HCT116 (cell line): ENCODE measurements at regions of chr18 and their contacts with region 1.

Region 1: GRCh38 chr18:58768293-58768974 is 96.2 kb upstream of the ZNF532 start:
- DNase-seq: peak; percentile 23
- ATAC-seq: peak; percentile 91
- H3K4me3 ChIP-seq: no peak overlapping the region
- H3K27ac ChIP-seq: no peak overlapping the region
- H3K4me1 ChIP-seq: peaks cover 2 to 3% of the 10 kb centered on the region in 2 experiments; a peak in 1 of 4 replicates
- H3K27me3 ChIP-seq: no peaks in the 10 kb centered on the region
- CTCF ChIP-seq: peak; percentile 53 to 75 (median 67); a peak in 5 of 6 replicates
- POLR2A ChIP-seq: no peak
- RAD21 ChIP-seq: peak; percentile 81

Region 2: DNA sequence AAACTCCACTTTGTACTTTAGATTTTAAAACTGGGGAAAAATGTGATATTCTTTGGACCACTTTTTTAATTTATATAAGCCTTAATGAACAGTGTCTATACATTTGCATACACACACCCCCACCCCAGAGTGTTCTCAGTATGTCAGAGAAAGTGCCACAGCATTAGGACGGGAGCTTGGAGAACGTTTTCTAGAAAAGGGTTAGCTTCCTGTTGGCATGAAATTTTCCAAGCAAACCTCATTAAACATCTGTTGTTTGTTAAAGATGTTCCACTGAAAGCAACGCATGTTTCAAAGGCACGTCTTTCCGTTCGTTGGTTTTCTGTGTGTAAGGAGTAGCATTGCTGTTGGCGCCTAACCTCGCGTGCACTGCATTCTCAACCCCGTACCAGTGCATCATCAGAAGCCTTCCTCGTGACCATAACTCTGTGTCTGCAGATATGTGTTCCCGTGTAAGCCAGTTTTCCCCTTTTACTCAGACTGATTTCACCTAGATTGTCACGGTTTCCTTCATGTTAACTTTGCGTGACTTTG is 368.0 kb before region 1 on chr18:
- CTCF ChIA-PET with region 1: interaction called, 4 read pairs
- POLR2A ChIA-PET with region 1: no interaction called
- RAD21 ChIA-PET with region 1: no interaction called
- intact Hi-C with region 1: loop called (anchors 1 kb)
- DNase-seq: no peak
- ATAC-seq: no peak
- H3K4me3 ChIP-seq: no peak overlapping the region
- H3K27ac ChIP-seq: no peak overlapping the region
- H3K4me1 ChIP-seq: no peaks in the 10 kb centered on the region
- H3K27me3 ChIP-seq: no peaks in the 10 kb centered on the region
- CTCF ChIP-seq: 0 out of 6 replicates have a peak, but pooled peaks of 1 of the 3 experiments have one; percentile 0
- POLR2A ChIP-seq: no peak
- RAD21 ChIP-seq: no peak

Region 3: DNA sequence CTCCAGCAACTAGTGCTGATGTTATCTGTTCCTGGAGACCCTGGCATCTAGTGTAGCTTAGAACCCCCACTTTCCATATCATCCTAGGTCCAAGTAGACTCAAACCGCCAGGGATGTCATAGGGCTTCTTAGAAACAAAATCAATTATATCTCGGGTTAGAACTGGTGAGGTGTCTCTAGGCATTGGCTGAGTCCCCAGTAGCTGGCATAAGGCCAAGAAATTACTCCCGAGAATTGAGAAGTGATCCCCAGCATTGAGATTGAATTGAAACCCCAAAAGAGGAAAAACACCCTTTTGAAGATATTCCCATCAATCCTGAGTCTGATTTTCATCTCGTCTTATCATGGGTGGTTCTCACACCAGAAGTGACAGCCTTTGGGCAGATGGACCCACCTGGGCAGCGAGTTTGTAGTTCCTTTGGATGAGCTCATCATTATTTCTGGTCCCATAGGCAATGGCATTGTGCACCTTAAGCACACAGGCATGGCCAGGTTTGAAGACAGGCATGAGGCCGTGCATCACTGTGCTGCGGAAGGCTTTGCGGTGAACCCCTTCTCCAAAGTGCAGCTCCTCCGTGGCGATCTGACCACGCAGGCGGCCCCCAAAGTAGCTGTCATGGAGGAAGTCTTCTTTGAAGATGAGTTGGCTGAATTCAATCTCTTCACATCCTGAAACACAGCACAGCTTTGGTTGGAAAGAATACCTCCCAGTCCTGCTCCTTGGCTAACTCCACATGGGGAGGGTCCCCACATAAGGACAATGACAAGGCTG is 251.7 kb before region 1 on chr18:
- CTCF ChIA-PET with region 1: interaction called, 12 read pairs
- POLR2A ChIA-PET with region 1: no interaction called
- RAD21 ChIA-PET with region 1: interaction called in 1 of 2 experiments, 5 read pairs
- intact Hi-C with region 1: no loop called
- DNase-seq: no peak
- ATAC-seq: no peak
- H3K4me3 ChIP-seq: no peak overlapping the region
- H3K27ac ChIP-seq: no peak overlapping the region
- H3K4me1 ChIP-seq: no peaks in the 10 kb centered on the region
- H3K27me3 ChIP-seq: no peaks in the 10 kb centered on the region
- CTCF ChIP-seq: no peak
- POLR2A ChIP-seq: no peak
- RAD21 ChIP-seq: no peak

Region 4: DNA sequence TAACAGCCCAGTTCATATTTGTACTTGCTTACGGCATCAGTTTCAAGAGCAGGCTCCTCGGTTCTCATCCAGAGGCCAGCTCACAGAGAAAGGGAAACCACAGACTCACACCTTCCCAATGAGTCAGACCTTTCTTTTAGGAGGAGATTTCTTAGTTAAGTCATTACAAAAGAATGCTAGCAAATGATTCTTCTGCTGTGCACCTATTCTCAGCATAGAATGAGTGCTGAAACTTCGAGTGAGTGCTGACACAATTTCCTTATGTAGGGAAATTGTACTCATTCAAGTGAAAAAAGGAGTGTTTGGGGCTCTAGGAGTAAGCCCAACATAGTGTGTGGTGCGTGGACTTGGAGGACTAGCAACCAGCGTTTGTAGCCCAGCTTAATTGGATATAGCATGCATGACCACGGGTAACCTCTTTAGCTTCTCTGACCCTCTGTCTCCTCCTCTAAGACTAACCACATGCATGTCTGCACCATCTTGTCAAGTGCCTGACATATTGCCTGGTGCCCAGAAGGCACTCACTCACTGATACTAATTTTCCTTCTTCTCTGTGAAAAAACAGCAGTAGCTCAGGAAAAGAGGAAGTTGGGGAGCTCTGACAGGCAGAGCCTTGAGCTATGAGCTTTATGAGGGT is 226.5 kb before region 1 on chr18:
- CTCF ChIA-PET with region 1: interaction called, 13 read pairs
- POLR2A ChIA-PET with region 1: no interaction called
- RAD21 ChIA-PET with region 1: no interaction called
- intact Hi-C with region 1: no loop called
- DNase-seq: peak; percentile 88
- ATAC-seq: peak; percentile 83
- H3K4me3 ChIP-seq: peak overlapping the region in 1 of 2 experiments; percentile 36; a peak in 2 of 4 replicates
- H3K27ac ChIP-seq: peak overlapping the region; percentile 63; the same call in 1 of the 2 replicates
- H3K4me1 ChIP-seq: peaks cover 26 to 75% of the 10 kb centered on the region in 2 experiments
- H3K27me3 ChIP-seq: no peaks in the 10 kb centered on the region
- CTCF ChIP-seq: no peak
- POLR2A ChIP-seq: no peak
- RAD21 ChIP-seq: no peak; the same call in 1 of the 2 replicates

Region 5: GRCh38 chr18:58639751-58640427 is 128.5 kb before region 1 on chr18:
- CTCF ChIA-PET with region 1: no interaction called
- POLR2A ChIA-PET with region 1: no interaction called
- RAD21 ChIA-PET with region 1: no interaction called
- intact Hi-C with region 1: no loop called
- DNase-seq: no peak
- ATAC-seq: no peak
- H3K4me3 ChIP-seq: no peak overlapping the region
- H3K27ac ChIP-seq: no peak overlapping the region
- H3K4me1 ChIP-seq: peaks cover 6 to 14% of the 10 kb centered on the region in 2 experiments; a peak in 3 of 4 replicates
- H3K27me3 ChIP-seq: no peaks in the 10 kb centered on the region
- CTCF ChIP-seq: no peak
- POLR2A ChIP-seq: no peak
- RAD21 ChIP-seq: no peak

Region 6: GRCh38 chr18:58781627-58782194 is 13.3 kb after region 1 on chr18:
- CTCF ChIA-PET with region 1: interaction called, 18 read pairs
- POLR2A ChIA-PET with region 1: no interaction called
- RAD21 ChIA-PET with region 1: no interaction called
- intact Hi-C with region 1: no loop called
- DNase-seq: peak; percentile 69
- ATAC-seq: peak; percentile 63
- H3K4me3 ChIP-seq: no peak overlapping the region
- H3K27ac ChIP-seq: no peak overlapping the region
- H3K4me1 ChIP-seq: peaks cover 12 to 26% of the 10 kb centered on the region in 2 experiments
- H3K27me3 ChIP-seq: peaks cover 23% of the 10 kb centered on the region
- CTCF ChIP-seq: peak; percentile 81 to 93 (median 91)
- POLR2A ChIP-seq: no peak
- RAD21 ChIP-seq: peak; percentile 97

Region 7: GRCh38 chr18:59070181-59070912 is 301.9 kb after region 1 on chr18:
- CTCF ChIA-PET with region 1: interaction called, 75 read pairs
- POLR2A ChIA-PET with region 1: interaction called, 5 read pairs
- RAD21 ChIA-PET with region 1: interaction called, 3 to 15 read pairs
- intact Hi-C with region 1: loop called (anchors 1 kb)
- DNase-seq: peak; percentile 77
- ATAC-seq: peak; percentile 96
- H3K4me3 ChIP-seq: no peak overlapping the region
- H3K27ac ChIP-seq: no peak overlapping the region
- H3K4me1 ChIP-seq: no peaks in the 10 kb centered on the region
- H3K27me3 ChIP-seq: no peaks in the 10 kb centered on the region
- CTCF ChIP-seq: peak; percentile 79 to 90 (median 86)
- POLR2A ChIP-seq: no peak
- RAD21 ChIP-seq: peak; percentile 79

Region 8: DNA sequence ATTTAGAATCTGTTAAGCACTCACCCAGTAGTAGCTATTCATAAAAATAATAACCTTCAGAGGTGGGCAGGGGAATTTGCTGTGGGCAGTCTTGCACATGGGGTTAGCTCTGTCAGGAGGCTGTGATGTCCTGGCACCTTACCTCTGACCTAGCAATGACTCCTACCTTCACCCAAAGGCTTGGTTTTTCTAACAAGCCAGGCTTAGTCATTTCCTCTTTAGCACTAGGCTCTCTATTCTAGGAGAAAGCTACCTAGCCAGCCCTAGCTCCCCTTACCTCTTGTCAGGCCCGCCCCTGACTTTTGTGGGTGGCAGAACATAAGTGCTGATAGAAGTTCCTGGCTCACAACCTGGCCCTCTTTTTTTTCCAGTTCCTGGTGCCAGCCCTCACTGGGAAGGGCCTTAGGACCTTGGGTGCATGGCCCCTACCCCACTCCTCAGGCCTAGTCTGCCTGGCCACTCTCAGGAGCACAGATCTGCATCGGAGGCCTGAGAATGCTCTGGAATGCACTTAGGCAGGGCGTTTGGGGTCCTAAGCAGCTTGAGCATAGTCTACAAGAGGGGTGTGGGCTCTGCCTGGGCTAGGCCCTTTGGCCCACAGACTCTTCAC is 532.3 kb after region 1 on chr18:
- CTCF ChIA-PET with region 1: no interaction called
- POLR2A ChIA-PET with region 1: no interaction called
- RAD21 ChIA-PET with region 1: no interaction called
- intact Hi-C with region 1: no loop called
- DNase-seq: no peak
- ATAC-seq: peak; percentile 34; the same call in 1 of the 2 replicates
- H3K4me3 ChIP-seq: no peak overlapping the region
- H3K27ac ChIP-seq: no peak overlapping the region
- H3K4me1 ChIP-seq: peaks cover 0 to 10% of the 10 kb centered on the region in 2 experiments; a peak in 2 of 4 replicates
- H3K27me3 ChIP-seq: peaks cover 11% of the 10 kb centered on the region; the same call in 1 of the 2 replicates
- CTCF ChIP-seq: no peak
- POLR2A ChIP-seq: no peak
- RAD21 ChIP-seq: no peak

Region 9: DNA sequence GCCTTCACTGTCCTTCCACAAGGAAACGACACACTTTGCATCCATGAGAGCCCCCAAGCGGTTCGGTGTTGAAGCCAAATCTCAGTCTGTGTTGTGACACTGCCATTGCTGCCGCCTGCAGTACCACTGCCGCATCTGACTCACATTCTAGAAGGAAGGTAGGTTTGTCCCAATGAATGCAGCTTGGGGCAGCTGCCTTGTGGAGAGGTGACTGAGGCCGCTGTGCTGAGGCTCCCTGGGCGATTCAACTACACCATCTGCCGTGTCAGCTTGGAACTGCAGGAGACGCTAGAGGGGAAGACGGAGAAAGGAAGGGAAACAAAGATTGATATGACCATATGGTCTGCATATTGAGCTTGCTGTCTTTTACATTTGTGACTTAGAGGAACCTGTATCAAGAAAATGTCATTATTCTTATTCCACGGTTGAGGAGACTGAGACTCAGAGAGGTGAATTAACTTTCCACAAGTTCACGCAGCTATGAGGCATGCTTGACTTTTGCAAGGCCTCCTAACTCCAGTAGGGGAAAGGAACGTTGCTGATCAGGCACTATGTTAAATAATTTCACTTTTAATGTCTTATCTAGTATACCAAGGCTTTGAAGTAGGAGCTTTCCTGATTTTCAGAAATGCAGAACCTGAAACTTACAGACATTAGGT is 634.1 kb after region 1 on chr18:
- CTCF ChIA-PET with region 1: interaction called, 8 read pairs
- POLR2A ChIA-PET with region 1: no interaction called
- RAD21 ChIA-PET with region 1: no interaction called
- intact Hi-C with region 1: loop called (anchors 5 kb)
- DNase-seq: peak; percentile 94
- ATAC-seq: peak; percentile 100
- H3K4me3 ChIP-seq: no peak overlapping the region
- H3K27ac ChIP-seq: no peak overlapping the region
- H3K4me1 ChIP-seq: no peaks in the 10 kb centered on the region
- H3K27me3 ChIP-seq: no peaks in the 10 kb centered on the region
- CTCF ChIP-seq: peak; percentile 90 to 99 (median 99)
- POLR2A ChIP-seq: no peak
- RAD21 ChIP-seq: peak; percentile 100

Region 10: GRCh38 chr18:60350941-60351340 is 1582.5 kb after region 1 on chr18:
- CTCF ChIA-PET with region 1: no interaction called
- POLR2A ChIA-PET with region 1: no interaction called
- RAD21 ChIA-PET with region 1: no interaction called
- intact Hi-C with region 1: no loop called
- DNase-seq: no peak
- ATAC-seq: no peak
- H3K4me3 ChIP-seq: no peak overlapping the region
- H3K27ac ChIP-seq: no peak overlapping the region
- H3K4me1 ChIP-seq: no peaks in the 10 kb centered on the region
- H3K27me3 ChIP-seq: no peaks in the 10 kb centered on the region
- CTCF ChIP-seq: no peak
- POLR2A ChIP-seq: no peak
- RAD21 ChIP-seq: no peak